Adrenal gland (tissue), 19 donors: ENCODE measurements at regions of chr5 and their contacts with region 1.

Region 1: GRCh38 chr5:134586866-134587524 is 45.6 kb downstream of the SAR1B start:
- DNase-seq: peak; percentile 84 to 93 (median 90)
- H3K4me3 ChIP-seq: no peak overlapping the region
- H3K27ac ChIP-seq: peak overlapping the region in 2 of 5 donors; percentile 9 to 34
- H3K4me1 ChIP-seq: peaks cover 0 to 11% of the 10 kb centered on the region in 2 donors
- H3K27me3 ChIP-seq: no peaks in the 10 kb centered on the region
- CTCF ChIP-seq: peak; percentile 76 to 91 (median 82)
- POLR2A ChIP-seq: peak in 1 of 2 donors; percentile 9

Region 2: GRCh38 chr5:134370871-134371833 is 215.8 kb before region 1 on chr5 and contains the start of gene UBE2B:
- intact Hi-C with region 1: loop called in 1 of 2 experiments (anchors 10 kb)
- DNase-seq: peak; percentile 98 to 100 (median 99)
- H3K4me3 ChIP-seq: peak within 1 kb of the TSS; percentile 62 to 95 (median 69)
- H3K27ac ChIP-seq: peak within 1 kb of the TSS; percentile 91 to 99 (median 98)
- H3K4me1 ChIP-seq: peaks cover 12 to 43% of the 10 kb centered on the region in 2 donors
- H3K27me3 ChIP-seq: no peaks in the 10 kb centered on the region
- CTCF ChIP-seq: peak in 1 of 6 experiments; percentile 13
- POLR2A ChIP-seq: peak; percentile 53 to 81
- total RNA-seq, gene UBE2B: 19.7 to 144 (median 58.2) TPM

Region 3: GRCh38 chr5:134477462-134478250 is 109.3 kb before region 1 on chr5:
- intact Hi-C with region 1: no loop called
- DNase-seq: peak in 1 of 7 donors; percentile 48
- H3K4me3 ChIP-seq: no peak overlapping the region
- H3K27ac ChIP-seq: no peak overlapping the region
- H3K4me1 ChIP-seq: no peaks in the 10 kb centered on the region
- H3K27me3 ChIP-seq: no peaks in the 10 kb centered on the region
- CTCF ChIP-seq: no peak
- POLR2A ChIP-seq: no peak

Region 4: GRCh38 chr5:134738133-134738962 is 151.4 kb after region 1 on chr5 and contains the start of gene CAMLG:
- intact Hi-C with region 1: no loop called
- DNase-seq: peak; percentile 98 to 99 (median 99)
- H3K4me3 ChIP-seq: peak within 1 kb of the TSS; percentile 54 to 95 (median 86)
- H3K27ac ChIP-seq: peak within 1 kb of the TSS; percentile 93 to 97 (median 97)
- H3K4me1 ChIP-seq: peaks cover 6 to 12% of the 10 kb centered on the region in 2 donors
- H3K27me3 ChIP-seq: no peaks in the 10 kb centered on the region
- CTCF ChIP-seq: peak in 5 of 6 experiments; percentile 51 to 65 (median 60)
- POLR2A ChIP-seq: peak; percentile 95 to 98
- total RNA-seq, gene CAMLG: 29.4 to 64.3 (median 41.9) TPM